Spleen (tissue), 13 donors: ENCODE measurements at regions of chr3 and their contacts with region 1.

Region 1: DNA sequence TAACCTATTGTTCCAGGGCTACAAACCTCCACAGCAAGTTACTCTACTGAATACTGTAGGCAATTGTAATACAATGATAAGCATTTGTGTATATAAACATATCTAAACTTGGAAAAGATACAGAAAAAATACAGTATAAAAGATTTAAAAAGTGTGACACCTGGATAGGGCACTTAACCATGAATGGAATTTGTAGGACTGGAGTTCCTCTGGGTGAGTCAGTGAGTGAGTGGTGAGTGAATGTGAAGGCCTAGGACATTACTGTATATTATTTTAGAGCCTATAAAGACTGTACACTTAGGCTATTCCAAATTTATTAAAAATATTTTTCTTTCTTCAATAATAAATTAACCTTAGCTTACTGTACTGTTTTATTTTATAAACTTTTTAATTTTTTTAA is 38.4 kb upstream of the SLC25A36 start:
- DNase-seq: no peak
- H3K4me3 ChIP-seq: no peak overlapping the region
- H3K27ac ChIP-seq: no peak overlapping the region
- H3K4me1 ChIP-seq: no peaks in the 10 kb centered on the region
- H3K27me3 ChIP-seq: no peaks in the 10 kb centered on the region
- CTCF ChIP-seq: no peak
- POLR2A ChIP-seq: no peak

Region 2: DNA sequence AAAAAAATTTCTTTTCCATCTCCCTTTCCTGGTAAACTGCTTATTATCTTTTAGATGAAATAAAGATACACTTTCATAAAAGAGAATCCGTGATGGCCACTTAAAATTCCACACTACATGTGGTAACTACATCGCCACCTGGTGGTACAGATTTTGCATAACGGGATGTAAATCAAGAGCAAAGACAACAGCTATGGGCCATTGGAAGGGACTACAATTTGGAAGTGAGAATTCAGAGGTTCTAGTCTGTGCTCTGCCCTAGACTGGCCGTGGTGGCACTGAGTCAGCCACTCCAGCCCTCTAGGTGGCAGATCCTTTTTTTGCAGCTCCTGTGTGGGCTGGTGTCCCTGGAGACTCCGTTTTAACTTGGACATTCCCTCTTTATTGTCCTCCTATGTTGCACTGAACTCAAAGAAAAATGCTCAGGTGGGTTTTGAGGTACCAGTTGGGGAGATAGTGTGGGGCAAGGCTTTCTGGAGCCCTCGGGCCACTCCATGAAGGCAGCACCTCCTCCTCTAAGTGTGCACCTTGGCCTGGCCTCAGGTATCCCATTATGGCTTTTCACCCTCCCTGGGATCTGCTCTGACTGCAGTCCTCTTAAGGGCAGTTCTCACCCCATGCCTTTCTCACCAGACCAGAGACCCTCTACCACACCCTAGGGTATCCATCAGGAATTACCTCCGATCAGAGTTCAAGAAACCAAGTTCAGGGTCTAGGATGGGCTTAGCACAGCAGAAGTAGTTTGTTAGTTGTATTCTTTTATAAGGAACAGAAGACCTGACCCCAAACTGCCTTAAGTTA is 202.8 kb after region 1 on chr3:
- intact Hi-C with region 1: loop called (anchors 5 kb)
- DNase-seq: no peak
- H3K4me3 ChIP-seq: no peak overlapping the region
- H3K27ac ChIP-seq: no peak overlapping the region
- H3K4me1 ChIP-seq: no peaks in the 10 kb centered on the region
- H3K27me3 ChIP-seq: no peaks in the 10 kb centered on the region
- CTCF ChIP-seq: peak; percentile 28 to 82 (median 69)
- POLR2A ChIP-seq: no peak

Region 3: GRCh38 chr3:141192345-141192744 is 289.1 kb after region 1 on chr3:
- intact Hi-C with region 1: loop called (anchors 5 kb)
- DNase-seq: peak; percentile 98
- H3K4me3 ChIP-seq: no peak overlapping the region
- H3K27ac ChIP-seq: no peak overlapping the region
- H3K4me1 ChIP-seq: peaks cover 0 to 10% (median 8%) of the 10 kb centered on the region in 6 donors
- H3K27me3 ChIP-seq: peaks cover 0 to 28% (median 0%) of the 10 kb centered on the region in 7 donors
- CTCF ChIP-seq: peak; percentile 92 to 100 (median 97)
- POLR2A ChIP-seq: no peak